Mammary epithelial cell (primary cell): ENCODE measurements at regions of chrX and their contacts with region 1.

Region 1: GRCh38 chrX:41895826-41896225 is 27.5 kb downstream of the CASK start:
- DNase-seq: no peak
- H3K4me3 ChIP-seq: no peak overlapping the region
- H3K27ac ChIP-seq: no peak overlapping the region
- H3K4me1 ChIP-seq: no peaks in the 10 kb centered on the region
- H3K27me3 ChIP-seq: peaks cover 6% of the 10 kb centered on the region
- CTCF ChIP-seq: no peak

Region 2: GRCh38 chrX:42085836-42086235 is 190.0 kb after region 1 on chrX:
- CTCF ChIA-PET with region 1: no interaction called
- dilution Hi-C with region 1: no loop called
- in situ Hi-C with region 1: no loop called
- intact Hi-C with region 1: no loop called
- DNase-seq: peak; percentile 39
- H3K4me3 ChIP-seq: no peak overlapping the region
- H3K27ac ChIP-seq: no peak overlapping the region
- H3K4me1 ChIP-seq: peaks cover 10% of the 10 kb centered on the region
- H3K27me3 ChIP-seq: peaks cover 2% of the 10 kb centered on the region
- CTCF ChIP-seq: no peak

Region 3: DNA sequence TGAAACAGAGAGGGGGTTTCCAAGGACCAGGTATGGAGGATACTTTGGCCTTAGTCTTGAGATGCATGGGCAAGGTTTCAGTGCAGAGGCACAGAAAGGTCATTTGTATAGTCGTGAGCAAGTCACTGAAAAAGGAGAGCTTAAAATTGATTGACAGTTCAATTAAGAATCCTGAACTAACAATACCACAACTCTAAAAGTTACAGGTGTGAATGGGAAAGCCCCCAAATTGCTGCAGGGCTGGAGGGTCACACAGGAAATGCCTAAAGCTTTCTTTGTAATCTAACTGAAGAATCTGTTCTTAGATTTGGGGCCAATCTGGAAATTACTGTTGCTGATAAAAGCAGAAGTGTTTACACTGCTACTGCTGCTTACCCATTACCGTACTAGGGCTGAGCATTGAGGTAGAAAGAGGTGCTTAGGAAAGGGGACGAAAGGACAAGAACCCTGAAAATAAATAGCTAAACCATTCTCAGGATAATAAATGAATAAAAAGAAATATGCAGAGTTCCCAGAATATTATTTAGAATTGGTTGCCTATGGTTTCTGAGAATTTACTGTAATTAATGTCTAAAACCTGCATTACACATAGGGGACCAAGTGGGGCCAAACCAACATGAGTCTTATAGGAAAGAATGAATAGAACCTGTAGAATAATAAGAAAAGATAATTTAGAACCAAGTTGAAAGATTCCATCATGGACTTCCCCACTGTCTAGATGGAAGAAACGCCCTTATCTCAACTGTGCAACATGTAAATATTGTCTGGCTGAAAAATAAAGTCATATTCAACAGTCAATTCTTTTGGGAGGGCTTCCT is 974.0 kb after region 1 on chrX:
- CTCF ChIA-PET with region 1: no interaction called
- dilution Hi-C with region 1: no loop called
- in situ Hi-C with region 1: no loop called
- intact Hi-C with region 1: loop called (anchors 5 kb)
- DNase-seq: no peak
- H3K4me3 ChIP-seq: no peak overlapping the region
- H3K27ac ChIP-seq: no peak overlapping the region
- H3K4me1 ChIP-seq: no peaks in the 10 kb centered on the region
- H3K27me3 ChIP-seq: peaks cover 2% of the 10 kb centered on the region
- CTCF ChIP-seq: no peak